GM12878 (cell line): ENCODE measurements at regions of chr17 and their contacts with region 1.

Region 1: DNA sequence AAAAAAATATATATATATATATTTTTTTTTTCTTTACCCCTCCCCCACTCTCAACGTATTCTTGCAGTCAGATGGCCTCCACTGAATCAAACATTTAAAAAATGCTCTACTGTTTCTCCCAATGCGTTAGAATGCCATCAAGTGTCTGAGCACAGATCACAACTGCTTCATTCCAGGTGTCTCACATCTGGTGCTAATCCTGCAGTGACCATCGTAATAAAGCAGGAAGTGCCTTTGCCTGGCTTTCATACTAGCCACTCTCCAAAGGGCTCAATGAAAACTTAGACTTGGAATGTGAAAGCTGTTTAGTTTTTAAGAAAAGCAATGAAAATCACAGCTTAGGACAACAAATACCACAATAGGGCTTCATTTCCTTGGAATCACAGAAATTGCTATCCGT is 37.2 kb downstream of the SKAP1 start:
- DNase-seq: no peak
- ATAC-seq: no peak
- H3K4me3 ChIP-seq: no peak overlapping the region
- H3K27ac ChIP-seq: no peak overlapping the region
- H3K4me1 ChIP-seq: peaks cover 3% of the 10 kb centered on the region; the same call in 1 of the 2 replicates
- H3K27me3 ChIP-seq: no peaks in the 10 kb centered on the region
- CTCF ChIP-seq: no peak
- EP300 ChIP-seq: no peak
- POLR2A ChIP-seq: no peak
- RAD21 ChIP-seq: no peak

Region 2: GRCh38 chr17:48374650-48375230 is 18.1 kb before region 1 on chr17:
- CTCF ChIA-PET with region 1: interaction called, 15 read pairs
- POLR2A ChIA-PET with region 1: interaction called, 5 read pairs
- RAD21 ChIA-PET with region 1: interaction called, 3 read pairs
- SMC1A ChIA-PET with region 1: interaction called, 9 read pairs
- in situ Hi-C with region 1: no loop called
- intact Hi-C with region 1: no loop called
- DNase-seq: no peak
- ATAC-seq: peak; percentile 92
- H3K4me3 ChIP-seq: no peak overlapping the region
- H3K27ac ChIP-seq: no peak overlapping the region
- H3K4me1 ChIP-seq: no peaks in the 10 kb centered on the region
- H3K27me3 ChIP-seq: no peaks in the 10 kb centered on the region
- CTCF ChIP-seq: peak; percentile 21 to 64 (median 54); a peak in 5 of 6 replicates
- EP300 ChIP-seq: no peak
- POLR2A ChIP-seq: no peak
- RAD21 ChIP-seq: peak; percentile 63

Region 3: DNA sequence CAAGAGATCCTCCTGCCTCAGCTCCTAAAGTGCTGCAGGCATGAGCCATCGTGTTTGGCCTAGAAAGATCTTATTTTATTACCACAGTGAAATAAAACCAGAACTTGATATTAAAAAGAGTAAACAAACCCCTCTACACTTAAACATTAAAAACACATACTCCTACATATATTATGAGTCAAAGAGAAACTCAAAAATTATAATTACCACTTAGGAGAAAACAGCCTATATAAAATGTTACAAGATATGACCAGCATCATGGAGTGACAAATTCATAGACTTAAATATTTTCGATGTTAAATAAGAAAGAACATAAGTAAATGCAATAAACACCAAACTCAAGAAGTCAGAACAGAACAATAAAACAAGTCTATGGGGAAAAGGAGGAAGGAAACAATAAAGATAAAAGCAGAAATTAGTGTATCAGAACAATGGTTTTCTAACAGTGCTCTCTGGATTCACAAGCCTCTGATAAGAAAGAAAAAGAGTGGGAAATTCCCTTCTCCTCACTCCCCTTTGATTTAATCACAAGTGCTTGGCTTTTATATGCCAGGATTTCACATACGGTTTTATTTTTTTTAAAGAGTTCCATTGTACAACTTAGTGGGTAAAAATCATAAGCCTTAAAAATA is 14.2 kb after region 1 on chr17:
- CTCF ChIA-PET with region 1: interaction called, 5 read pairs
- POLR2A ChIA-PET with region 1: interaction called, 7 read pairs
- RAD21 ChIA-PET with region 1: interaction called, 5 read pairs
- SMC1A ChIA-PET with region 1: interaction called, 18 read pairs
- in situ Hi-C with region 1: no loop called
- intact Hi-C with region 1: no loop called
- DNase-seq: no peak
- ATAC-seq: no peak; the same call in 2 of the 3 replicates
- H3K4me3 ChIP-seq: no peak overlapping the region
- H3K27ac ChIP-seq: 0 out of 2 replicates have a peak overlapping the region, but pooled peaks have one; percentile 43
- H3K4me1 ChIP-seq: peaks cover 5% of the 10 kb centered on the region; the same call in 1 of the 2 replicates
- H3K27me3 ChIP-seq: no peaks in the 10 kb centered on the region
- CTCF ChIP-seq: no peak
- EP300 ChIP-seq: no peak
- POLR2A ChIP-seq: no peak
- RAD21 ChIP-seq: no peak

Region 4: DNA sequence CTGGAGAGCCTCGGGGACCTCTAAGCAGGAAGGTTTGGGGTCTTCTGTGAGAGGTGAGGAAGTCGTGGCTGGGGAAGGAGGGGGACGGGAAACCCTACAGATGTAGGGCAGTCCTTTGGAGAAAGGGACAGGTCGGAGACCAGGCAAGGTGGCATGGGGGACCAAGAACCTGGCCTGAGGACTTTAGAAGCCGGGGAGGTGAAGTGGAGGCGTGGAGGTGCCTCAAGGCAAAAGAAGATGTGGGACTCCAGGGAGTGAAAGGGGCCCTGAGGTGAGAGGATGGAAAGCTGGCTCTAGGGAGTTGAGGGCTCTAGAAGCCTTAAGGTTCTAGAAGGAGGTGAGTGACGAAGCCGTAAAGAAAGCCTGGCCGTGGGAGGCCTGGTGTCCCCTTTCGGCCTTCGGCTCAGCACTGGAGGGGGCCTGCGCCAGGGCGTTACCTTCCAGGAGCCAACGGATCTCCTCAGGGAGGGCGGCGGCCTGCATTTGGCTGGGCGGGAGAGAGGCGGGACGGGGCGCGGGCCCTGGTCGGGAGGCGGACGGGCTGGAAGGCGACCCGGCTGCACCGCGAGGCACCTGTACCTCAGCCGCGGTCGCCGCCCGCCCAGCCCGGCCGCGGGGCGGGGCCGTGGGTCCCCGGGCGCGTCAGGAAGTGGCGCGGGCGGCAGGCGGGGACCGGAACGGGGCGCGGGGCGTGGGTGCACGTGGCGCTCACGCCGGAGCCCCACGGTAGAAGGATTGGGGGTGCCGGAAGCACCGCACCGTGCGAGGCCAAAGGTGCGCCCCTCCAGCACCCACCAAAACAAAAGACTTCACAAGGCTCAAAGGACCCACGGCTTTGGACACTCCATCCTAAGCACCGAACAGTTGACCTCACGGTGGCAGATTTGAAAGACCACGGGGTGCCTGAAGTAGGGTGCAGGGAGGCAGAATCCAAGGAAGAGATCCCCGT is 37.1 kb after region 1 on chr17 and contains the start of gene SKAP1:
- CTCF ChIA-PET with region 1: interaction called, 4 read pairs
- POLR2A ChIA-PET with region 1: interaction called, 3 read pairs
- RAD21 ChIA-PET with region 1: no interaction called
- SMC1A ChIA-PET with region 1: interaction called, 10 read pairs
- in situ Hi-C with region 1: no loop called
- intact Hi-C with region 1: no loop called
- DNase-seq: no peak
- ATAC-seq: peak; percentile 84
- H3K4me3 ChIP-seq: peak within 1 kb of the TSS; percentile 94
- H3K27ac ChIP-seq: peak within 1 kb of the TSS; percentile 74
- H3K4me1 ChIP-seq: peaks cover 8% of the 10 kb centered on the region
- H3K27me3 ChIP-seq: no peaks in the 10 kb centered on the region
- CTCF ChIP-seq: no peak
- EP300 ChIP-seq: no peak
- POLR2A ChIP-seq: peak; percentile 92
- RAD21 ChIP-seq: no peak
- polyA plus RNA-seq, gene SKAP1: 17.1 to 34.2 TPM

Region 5: GRCh38 chr17:48513097-48513496 is 120.2 kb after region 1 on chr17:
- CTCF ChIA-PET with region 1: no interaction called
- POLR2A ChIA-PET with region 1: interaction called, 10 read pairs
- RAD21 ChIA-PET with region 1: no interaction called
- SMC1A ChIA-PET with region 1: no interaction called
- in situ Hi-C with region 1: no loop called
- intact Hi-C with region 1: no loop called
- DNase-seq: no peak
- ATAC-seq: peak; percentile 53
- H3K4me3 ChIP-seq: peak overlapping the region; percentile 34; the same call in 1 of the 2 replicates
- H3K27ac ChIP-seq: peak overlapping the region; percentile 54
- H3K4me1 ChIP-seq: peaks cover 56% of the 10 kb centered on the region
- H3K27me3 ChIP-seq: no peaks in the 10 kb centered on the region
- CTCF ChIP-seq: no peak
- EP300 ChIP-seq: no peak
- POLR2A ChIP-seq: no peak
- RAD21 ChIP-seq: no peak